Sigmoid colon (tissue), 7 donors: ENCODE measurements at regions of chr18 and their contacts with region 1.

Region 1: DNA sequence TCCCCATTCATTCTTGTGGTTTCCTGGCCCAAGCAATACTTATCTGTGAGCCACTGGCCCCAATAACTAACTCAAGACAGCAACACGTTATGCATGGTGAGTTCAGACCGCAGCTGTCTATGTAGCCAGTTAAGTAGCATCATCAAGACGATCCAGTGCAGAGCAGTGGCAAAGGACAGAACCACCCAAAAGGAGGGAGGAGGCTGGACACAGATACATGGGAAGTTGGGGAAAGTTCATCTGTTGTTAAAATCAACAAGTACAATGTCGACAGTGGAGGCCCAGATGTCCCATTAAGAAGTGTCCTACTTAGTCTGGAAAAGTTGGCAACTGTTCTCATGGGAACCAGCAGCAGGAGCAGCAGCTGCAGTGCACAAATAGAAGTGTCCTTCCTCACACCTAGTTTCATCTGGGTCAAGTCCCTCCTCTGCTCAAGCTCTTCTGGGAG is 106.9 kb upstream of the THOC1 start:
- DNase-seq: peak; percentile 86
- H3K4me3 ChIP-seq: no peak overlapping the region
- H3K27ac ChIP-seq: peak overlapping the region in 3 of 4 donors; percentile 40 to 65 (median 59)
- H3K4me1 ChIP-seq: peaks cover 0 to 78% (median 68%) of the 10 kb centered on the region in 4 donors
- H3K27me3 ChIP-seq: no peaks in the 10 kb centered on the region
- CTCF ChIP-seq: no peak
- EP300 ChIP-seq: no peak
- POLR2A ChIP-seq: no peak

Region 2: DNA sequence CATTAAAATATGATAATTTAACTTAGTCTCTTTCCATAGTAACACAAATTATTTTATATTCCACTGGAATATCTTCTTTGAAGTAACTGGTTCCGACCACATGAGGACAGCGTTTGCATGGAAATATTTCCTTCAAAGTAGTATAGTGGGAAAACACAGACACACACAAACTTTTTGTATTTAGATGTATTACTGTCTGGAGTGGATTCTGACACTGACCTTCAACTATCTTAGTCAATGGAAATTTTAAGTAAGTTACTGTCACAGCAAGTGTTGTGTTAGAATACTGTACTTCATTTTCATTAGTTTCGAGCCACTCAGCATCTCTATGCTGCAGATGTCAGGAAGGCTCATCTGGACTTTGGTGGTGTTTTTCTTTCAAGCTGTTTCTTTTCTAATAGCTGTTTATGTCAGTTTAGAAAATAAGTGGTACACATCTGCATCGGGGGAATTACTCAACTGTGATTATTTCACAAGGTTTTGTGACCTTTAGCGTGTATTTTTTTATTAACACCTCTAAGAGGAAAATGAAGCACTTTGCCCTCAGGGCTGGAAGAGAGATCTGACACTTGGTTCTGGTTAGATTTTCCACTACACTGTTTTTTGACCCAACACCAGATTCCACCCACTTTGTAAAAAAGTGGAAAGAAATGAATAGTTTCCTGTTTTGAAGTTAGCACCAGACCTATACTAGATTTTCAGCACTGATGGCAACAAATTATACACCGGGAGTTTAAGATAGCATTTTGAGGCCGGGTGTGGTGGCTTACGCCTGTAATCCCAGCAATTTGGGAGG is 88.0 kb before region 1 on chr18:
- intact Hi-C with region 1: no loop called
- DNase-seq: no peak
- H3K4me3 ChIP-seq: no peak overlapping the region
- H3K27ac ChIP-seq: no peak overlapping the region
- H3K4me1 ChIP-seq: no peaks in the 10 kb centered on the region
- H3K27me3 ChIP-seq: no peaks in the 10 kb centered on the region
- CTCF ChIP-seq: peak; percentile 27 to 54 (median 46)
- EP300 ChIP-seq: no peak
- POLR2A ChIP-seq: no peak

Region 3: GRCh38 chr18:340044-340443 is 34.7 kb before region 1 on chr18:
- intact Hi-C with region 1: loop called (anchors 5 kb)
- DNase-seq: peak; percentile 84
- H3K4me3 ChIP-seq: no peak overlapping the region
- H3K27ac ChIP-seq: peak overlapping the region in 3 of 4 donors; percentile 63 to 77 (median 71)
- H3K4me1 ChIP-seq: peaks cover 0 to 26% (median 20%) of the 10 kb centered on the region in 4 donors
- H3K27me3 ChIP-seq: no peaks in the 10 kb centered on the region
- CTCF ChIP-seq: no peak
- EP300 ChIP-seq: peak in 2 of 4 donors; percentile 47 to 51
- POLR2A ChIP-seq: no peak

Region 4: DNA sequence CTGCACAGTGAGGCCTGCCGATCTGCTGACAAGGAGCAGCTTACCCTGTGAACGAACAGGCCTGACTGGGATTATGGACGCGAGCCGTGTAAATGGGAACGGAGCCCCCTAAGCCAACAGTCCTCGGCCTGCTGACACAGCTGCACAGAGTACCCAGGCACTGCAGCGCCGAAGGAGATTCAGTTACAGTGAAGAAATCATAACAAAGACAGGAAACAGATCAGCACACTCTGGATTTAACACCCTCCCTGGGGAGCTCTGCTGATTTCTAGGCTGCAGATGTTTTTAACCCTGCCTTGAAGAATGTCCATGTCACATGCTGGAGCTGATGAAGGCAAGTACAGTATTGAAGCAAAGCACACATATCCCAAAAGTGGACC is 82.4 kb after region 1 on chr18:
- intact Hi-C with region 1: loop called (anchors 5 kb)
- DNase-seq: peak; percentile 82
- H3K4me3 ChIP-seq: peak overlapping the region; percentile 7 to 30 (median 22)
- H3K27ac ChIP-seq: peak overlapping the region; percentile 74 to 86 (median 82)
- H3K4me1 ChIP-seq: peaks cover 0 to 50% (median 34%) of the 10 kb centered on the region in 4 donors
- H3K27me3 ChIP-seq: no peaks in the 10 kb centered on the region
- CTCF ChIP-seq: no peak
- EP300 ChIP-seq: no peak
- POLR2A ChIP-seq: no peak